Heart right ventricle (tissue), 16 donors: ENCODE measurements at regions of chr11 and their contacts with region 1.

Region 1: GRCh38 chr11:93234602-93235207 is 36.9 kb upstream of the SLC36A4 start:
- DNase-seq: peak; percentile 57 to 76
- ATAC-seq: peak; percentile 90 to 99 (median 96)
- H3K4me3 ChIP-seq: no peak overlapping the region
- H3K27ac ChIP-seq: no peak overlapping the region
- H3K4me1 ChIP-seq: peaks cover 0 to 5% (median 0%) of the 10 kb centered on the region in 9 donors
- H3K27me3 ChIP-seq: peaks cover 0 to 13% (median 0%) of the 10 kb centered on the region in 7 donors
- CTCF ChIP-seq: peak; percentile 72 to 96 (median 91)

Region 2: DNA sequence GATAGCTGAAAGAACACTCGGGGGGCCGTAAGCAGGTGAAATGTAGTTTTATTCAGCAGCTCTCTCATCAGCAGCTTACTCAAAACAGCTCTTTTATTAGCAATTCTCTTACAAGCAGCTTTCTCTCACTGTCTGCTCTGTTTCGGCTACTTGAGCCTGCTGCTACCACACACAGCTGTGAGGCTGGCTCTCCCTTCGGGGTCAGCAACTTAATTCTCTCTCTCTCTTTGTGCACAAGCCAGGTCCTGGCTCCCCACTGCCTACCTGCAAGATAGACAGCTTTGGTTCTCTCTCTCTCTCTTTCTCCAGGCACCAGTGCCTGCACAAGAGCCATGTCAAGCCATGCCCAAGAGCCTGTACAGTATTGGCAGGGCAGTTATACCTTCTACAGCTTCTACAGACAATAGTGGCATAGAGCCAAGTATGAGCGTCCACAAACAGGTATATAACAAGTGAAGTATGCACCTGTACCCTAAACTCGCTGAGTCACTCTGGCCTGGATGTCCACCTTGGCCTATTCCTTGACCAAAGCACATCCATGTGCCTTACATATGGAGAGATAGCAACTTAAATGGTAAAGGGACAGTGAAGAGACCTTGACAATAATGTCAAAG is 154.5 kb before region 1 on chr11:
- intact Hi-C with region 1: no loop called
- DNase-seq: no peak
- ATAC-seq: no peak
- H3K4me3 ChIP-seq: no peak overlapping the region
- H3K27ac ChIP-seq: no peak overlapping the region
- H3K4me1 ChIP-seq: no peaks in the 10 kb centered on the region
- H3K27me3 ChIP-seq: peaks cover 0 to 11% (median 0%) of the 10 kb centered on the region in 7 donors
- CTCF ChIP-seq: no peak

Region 3: GRCh38 chr11:93279851-93280347 is 45.2 kb after region 1 on chr11:
- intact Hi-C with region 1: no loop called
- DNase-seq: no peak
- ATAC-seq: no peak
- H3K4me3 ChIP-seq: no peak overlapping the region
- H3K27ac ChIP-seq: no peak overlapping the region
- H3K4me1 ChIP-seq: no peaks in the 10 kb centered on the region
- H3K27me3 ChIP-seq: no peaks in the 10 kb centered on the region
- CTCF ChIP-seq: no peak

Region 4: DNA sequence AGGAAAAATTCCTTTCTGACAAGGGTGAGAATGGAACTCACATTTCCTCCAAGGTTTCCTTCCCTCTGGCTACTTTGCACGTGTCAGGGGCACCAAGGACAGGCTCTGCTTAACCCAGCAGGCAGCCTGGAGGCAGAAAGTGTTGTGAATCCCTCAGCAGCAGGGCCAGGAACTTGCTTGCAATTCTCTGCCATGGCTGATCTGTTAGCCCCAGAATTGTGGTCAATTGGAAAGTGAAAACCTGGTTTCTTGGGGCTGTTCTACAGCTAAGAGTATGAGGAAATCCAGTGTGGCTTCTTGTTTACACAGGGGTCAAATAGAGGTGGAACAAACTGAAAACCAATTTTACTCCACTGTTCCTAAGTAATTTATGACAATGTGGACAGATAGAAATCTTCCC is 388.5 kb after region 1 on chr11:
- intact Hi-C with region 1: loop called in 1 of 10 experiments (anchors 10 kb)
- DNase-seq: no peak
- ATAC-seq: no peak
- H3K4me3 ChIP-seq: no peak overlapping the region
- H3K27ac ChIP-seq: no peak overlapping the region
- H3K4me1 ChIP-seq: no peaks in the 10 kb centered on the region
- H3K27me3 ChIP-seq: peaks cover 0 to 13% (median 3%) of the 10 kb centered on the region in 7 donors
- CTCF ChIP-seq: no peak